ENCODE measurements at regions of chr17 and their contacts with region 1.

Region 1: GRCh38 chr17:46822388-46822921 is 4.0 kb upstream of the WNT3 start:
- DNase-seq: no peak
- H3K4me3 ChIP-seq: no peak overlapping the region
- H3K27me3 ChIP-seq: peaks cover 52% of the 10 kb centered on the region
- CTCF ChIP-seq: peak; percentile 77

Region 2: DNA sequence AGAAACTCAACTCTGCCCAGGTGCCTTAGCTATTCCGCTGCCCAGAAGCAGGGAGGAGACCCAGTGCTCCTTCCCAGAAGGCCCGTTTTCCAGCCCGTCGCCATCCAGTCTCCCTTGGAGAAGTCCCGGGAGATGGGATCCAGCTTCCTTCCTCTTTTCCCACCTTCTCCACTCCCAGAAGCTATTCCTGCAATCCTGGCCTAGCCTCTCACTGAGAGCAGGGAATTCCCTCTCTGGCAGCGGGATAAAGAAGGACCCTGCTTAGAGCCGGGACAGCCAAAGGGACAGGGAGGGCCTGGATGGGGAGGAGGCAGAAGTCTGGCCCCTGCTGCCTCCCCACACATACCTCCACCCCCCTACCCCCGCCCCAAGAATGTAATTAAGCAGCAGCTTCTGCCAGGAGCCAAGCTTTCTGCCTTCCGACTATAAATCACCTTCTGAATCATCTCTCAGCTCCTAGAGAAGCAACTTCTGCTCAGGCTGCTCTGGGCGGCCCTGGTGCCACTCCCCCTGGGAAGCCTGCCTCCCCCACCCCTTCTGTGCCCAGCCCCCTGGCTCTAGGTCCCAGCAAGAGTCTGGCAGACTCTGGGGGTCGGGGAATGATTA is 10.4 kb before region 1 on chr17:
- CTCF ChIA-PET with region 1: interaction called, 10 read pairs
- POLR2A ChIA-PET with region 1: no interaction called
- DNase-seq: peak; percentile 36
- H3K4me3 ChIP-seq: no peak overlapping the region
- H3K27me3 ChIP-seq: peaks cover 6% of the 10 kb centered on the region
- CTCF ChIP-seq: no peak

Region 3: DNA sequence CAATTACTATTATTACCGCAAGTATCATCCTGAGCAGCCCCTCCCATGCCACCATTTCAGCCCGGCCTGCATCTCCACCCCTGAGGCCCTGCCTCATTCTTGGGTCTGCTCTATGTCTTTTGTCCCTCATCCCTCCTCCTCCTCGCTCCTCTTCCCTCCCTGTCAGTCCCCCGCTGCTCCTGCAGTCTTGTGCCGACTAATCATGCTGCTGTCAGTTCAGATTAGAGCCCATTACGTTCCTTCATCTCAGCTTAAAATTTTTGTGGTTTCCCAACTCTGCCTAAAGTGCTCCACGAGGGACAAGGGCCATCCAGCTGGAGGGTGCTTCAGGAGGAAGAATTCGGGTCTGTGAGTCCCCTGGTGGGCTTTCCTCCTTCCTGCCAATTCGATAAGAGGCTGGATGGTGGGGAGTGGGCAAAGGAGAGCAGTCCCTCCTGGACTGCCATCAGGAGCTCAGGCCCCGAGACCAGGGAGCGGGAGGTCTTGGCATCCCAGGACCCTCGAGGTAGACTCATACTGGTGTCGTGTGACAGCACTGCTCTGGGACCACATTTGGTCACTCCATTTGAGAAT is 67.6 kb after region 1 on chr17:
- CTCF ChIA-PET with region 1: no interaction called
- POLR2A ChIA-PET with region 1: no interaction called
- DNase-seq: no peak
- H3K4me3 ChIP-seq: no peak overlapping the region
- H3K27me3 ChIP-seq: peaks cover 26% of the 10 kb centered on the region
- CTCF ChIP-seq: no peak

Region 4: GRCh38 chr17:46910179-46910927 is 87.9 kb after region 1 on chr17:
- CTCF ChIA-PET with region 1: no interaction called
- POLR2A ChIA-PET with region 1: no interaction called
- DNase-seq: no peak
- H3K4me3 ChIP-seq: no peak overlapping the region
- H3K27me3 ChIP-seq: peaks cover 12% of the 10 kb centered on the region
- CTCF ChIP-seq: no peak